ENCODE measurements at regions of chr19 and their contacts with region 1.

Region 1: DNA sequence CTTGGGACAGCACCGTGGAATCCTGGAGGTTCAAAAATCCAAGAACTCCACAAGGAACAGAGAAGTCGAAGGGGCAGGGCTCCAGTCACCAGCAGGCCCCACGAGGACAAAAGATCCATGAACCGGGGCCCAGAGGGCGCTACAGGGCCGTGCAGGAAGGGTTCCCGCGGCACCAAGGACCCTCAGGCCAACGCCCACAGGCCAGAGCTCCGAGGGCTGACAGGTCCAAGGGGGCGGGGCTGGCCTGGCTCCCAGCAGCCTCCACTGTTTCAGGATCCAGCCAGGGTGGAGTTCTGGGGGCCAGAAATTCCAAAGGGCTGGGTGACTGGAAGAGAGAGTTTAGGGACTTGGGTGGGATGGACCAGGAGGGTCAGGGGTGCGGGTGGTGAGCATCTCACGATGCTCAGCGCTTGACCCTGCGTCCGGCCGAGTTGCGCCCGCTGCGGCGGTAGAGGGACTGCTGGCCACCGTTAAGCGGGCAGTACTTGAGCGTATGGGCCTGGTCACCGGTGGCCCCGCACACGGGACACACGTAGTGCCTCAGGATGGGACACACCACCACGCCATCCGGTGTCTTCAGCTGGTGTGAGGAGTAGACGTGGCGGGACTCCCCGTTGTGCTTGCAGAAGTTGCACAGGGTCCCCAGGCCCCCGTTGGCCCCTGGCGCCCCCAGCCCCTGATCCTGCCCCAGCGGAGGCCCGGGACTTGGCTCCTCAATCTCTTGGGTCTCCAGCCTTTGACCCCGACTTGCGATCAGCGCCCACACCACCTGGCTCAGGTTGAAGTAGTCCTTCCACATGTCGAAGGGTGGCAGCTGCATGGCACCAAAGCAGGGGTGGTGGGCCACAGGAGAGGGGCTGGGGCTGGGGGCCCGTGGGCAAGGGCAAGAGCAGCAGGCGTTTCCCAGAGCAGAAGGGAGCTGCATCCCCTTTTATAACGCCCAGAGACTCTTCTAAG is at the start of gene NANOS2:
- DNase-seq: peak; percentile 94
- ATAC-seq: peak; percentile 98
- H3K4me3 Mint-ChIP-seq: no peak within 1 kb of the TSS
- H3K27ac Mint-ChIP-seq: no peak within 1 kb of the TSS
- H3K4me1 Mint-ChIP-seq: no peaks in the 10 kb centered on the region
- H3K27me3 Mint-ChIP-seq: peaks cover 7% of the 10 kb centered on the region
- CTCF ChIP-seq: no peak
- total RNA-seq, gene NANOS2: 0.13 to 0.18 TPM in 2 of 3 replicates, not detected in the other

Region 2: GRCh38 chr19:45848922-45849321 is 65.2 kb before region 1 on chr19:
- CTCF ChIA-PET with region 1: no interaction called
- POLR2A ChIA-PET with region 1: no interaction called
- DNase-seq: no peak
- ATAC-seq: peak; percentile 73
- H3K4me3 Mint-ChIP-seq: no peak overlapping the region
- H3K27ac Mint-ChIP-seq: no peak overlapping the region
- H3K4me1 Mint-ChIP-seq: no peaks in the 10 kb centered on the region
- H3K27me3 Mint-ChIP-seq: no peaks in the 10 kb centered on the region
- CTCF ChIP-seq: peak; percentile 26; the same call in 1 of the 2 replicates

Region 3: GRCh38 chr19:45902651-45903625 is 11.2 kb before region 1 on chr19:
- CTCF ChIA-PET with region 1: interaction called, 35 read pairs
- POLR2A ChIA-PET with region 1: no interaction called
- DNase-seq: peak; percentile 99
- ATAC-seq: peak; percentile 84
- H3K4me3 Mint-ChIP-seq: peak overlapping the region; percentile 91
- H3K27ac Mint-ChIP-seq: peak overlapping the region; percentile 57; the same call in 1 of the 2 replicates
- H3K4me1 Mint-ChIP-seq: peaks cover 12% of the 10 kb centered on the region
- H3K27me3 Mint-ChIP-seq: peaks cover 25% of the 10 kb centered on the region
- CTCF ChIP-seq: no peak

Region 4: DNA sequence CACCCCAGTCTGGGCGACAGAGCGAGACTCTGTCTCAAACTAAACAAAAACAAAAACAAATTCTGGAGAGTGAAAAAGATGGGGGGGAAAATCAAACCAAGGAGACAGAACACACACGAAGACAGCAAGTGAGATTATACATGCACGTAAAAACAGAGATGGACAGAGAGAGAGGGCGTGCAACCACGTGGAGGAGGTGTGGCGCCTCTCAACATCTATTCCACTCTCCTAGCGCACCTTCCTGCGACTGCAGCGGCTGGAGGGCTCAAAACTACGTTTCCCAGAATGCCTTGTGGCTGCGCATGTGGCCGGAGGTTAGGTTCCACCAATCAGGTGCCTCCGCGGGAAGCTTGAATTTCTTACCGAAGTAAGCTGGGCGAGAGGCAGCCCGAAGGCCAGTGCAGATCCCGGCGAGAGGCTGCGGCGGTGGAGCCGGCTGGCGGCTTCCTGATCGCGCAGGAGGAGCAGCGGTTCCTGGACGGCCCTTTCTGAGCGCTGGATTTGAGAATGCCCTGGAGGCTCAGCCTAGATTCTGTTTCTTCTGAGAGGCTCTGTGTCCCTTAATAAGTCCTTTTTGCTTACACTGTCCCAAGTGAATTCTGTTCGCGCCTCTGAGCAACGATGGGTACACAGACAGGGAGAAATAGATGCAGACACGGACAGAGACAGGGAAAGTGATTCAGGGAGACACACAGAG is 13.6 kb after region 1 on chr19:
- CTCF ChIA-PET with region 1: interaction called, 17 read pairs
- POLR2A ChIA-PET with region 1: no interaction called
- DNase-seq: peak; percentile 95
- ATAC-seq: peak; percentile 99
- H3K4me3 Mint-ChIP-seq: peak overlapping the region; percentile 63
- H3K27ac Mint-ChIP-seq: no peak overlapping the region
- H3K4me1 Mint-ChIP-seq: peaks cover 8% of the 10 kb centered on the region
- H3K27me3 Mint-ChIP-seq: peaks cover 66% of the 10 kb centered on the region
- CTCF ChIP-seq: no peak

Region 5: GRCh38 chr19:45973578-45974338 is 59.6 kb after region 1 on chr19 and contains the start of gene NOVA2:
- CTCF ChIA-PET with region 1: interaction called, 11 read pairs
- POLR2A ChIA-PET with region 1: no interaction called
- DNase-seq: peak; percentile 99
- ATAC-seq: peak; percentile 99
- H3K4me3 Mint-ChIP-seq: peak within 1 kb of the TSS; percentile 61
- H3K27ac Mint-ChIP-seq: no peak within 1 kb of the TSS
- H3K4me1 Mint-ChIP-seq: peaks cover 16% of the 10 kb centered on the region
- H3K27me3 Mint-ChIP-seq: peaks cover 87% of the 10 kb centered on the region
- CTCF ChIP-seq: no peak
- total RNA-seq, gene NOVA2: 11.3 to 15.6 TPM (median 15.4 TPM) in 3 replicates

Region 6: DNA sequence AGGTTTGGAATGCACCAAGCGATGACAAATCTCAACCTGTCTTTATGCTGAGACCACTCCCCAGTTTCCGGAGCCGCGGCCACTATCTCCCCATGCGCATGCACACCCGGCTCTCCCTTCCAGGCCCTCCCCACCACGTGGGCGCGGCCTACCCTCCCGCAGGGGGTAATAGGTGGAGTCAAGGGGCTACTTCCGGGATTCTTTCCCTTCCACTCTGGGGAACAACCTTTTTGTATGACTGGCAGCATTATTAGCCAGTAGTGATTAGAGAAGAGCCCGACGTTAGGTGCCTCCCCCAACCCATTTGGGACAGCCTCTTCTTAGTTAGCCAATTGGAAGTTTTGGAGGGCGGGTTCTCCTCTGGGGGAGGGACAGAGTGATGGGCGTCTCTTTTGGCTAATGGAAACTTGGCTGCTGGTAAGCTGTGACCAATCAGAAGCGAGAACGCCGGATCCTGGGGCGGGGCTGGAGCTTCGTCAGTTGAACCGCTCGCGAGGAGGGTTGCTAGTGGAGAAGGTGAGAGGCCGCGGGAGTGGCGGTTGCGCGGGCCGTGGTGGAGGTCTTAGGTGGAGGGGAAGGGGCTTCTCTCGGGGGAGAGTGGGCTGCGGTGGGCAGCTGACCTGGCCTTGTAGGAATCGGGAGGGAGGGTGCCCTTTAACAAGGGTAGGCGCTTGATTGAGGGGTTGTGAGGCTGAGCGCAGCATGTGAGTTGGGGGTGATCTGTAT is 81.0 kb after region 1 on chr19 and contains the start of gene CCDC61:
- CTCF ChIA-PET with region 1: interaction called, 10 read pairs
- POLR2A ChIA-PET with region 1: no interaction called
- DNase-seq: peak; percentile 97
- ATAC-seq: peak; percentile 96
- H3K4me3 Mint-ChIP-seq: no peak within 1 kb of the TSS
- H3K27ac Mint-ChIP-seq: peak within 1 kb of the TSS; percentile 34
- H3K4me1 Mint-ChIP-seq: peaks cover 16% of the 10 kb centered on the region
- H3K27me3 Mint-ChIP-seq: peaks cover 12% of the 10 kb centered on the region; the same call in 1 of the 2 replicates
- CTCF ChIP-seq: no peak
- total RNA-seq, gene CCDC61: 25.2 to 33.7 TPM (median 26.6 TPM) in 3 replicates

Region 7: GRCh38 chr19:46009530-46010510 is 95.7 kb after region 1 on chr19:
- CTCF ChIA-PET with region 1: interaction called, 25 read pairs
- POLR2A ChIA-PET with region 1: no interaction called
- DNase-seq: peak; percentile 89
- ATAC-seq: peak; percentile 90
- H3K4me3 Mint-ChIP-seq: no peak overlapping the region
- H3K27ac Mint-ChIP-seq: no peak overlapping the region
- H3K4me1 Mint-ChIP-seq: peaks cover 5% of the 10 kb centered on the region
- H3K27me3 Mint-ChIP-seq: peaks cover 14% of the 10 kb centered on the region
- CTCF ChIP-seq: peak; percentile 97

Region 8: DNA sequence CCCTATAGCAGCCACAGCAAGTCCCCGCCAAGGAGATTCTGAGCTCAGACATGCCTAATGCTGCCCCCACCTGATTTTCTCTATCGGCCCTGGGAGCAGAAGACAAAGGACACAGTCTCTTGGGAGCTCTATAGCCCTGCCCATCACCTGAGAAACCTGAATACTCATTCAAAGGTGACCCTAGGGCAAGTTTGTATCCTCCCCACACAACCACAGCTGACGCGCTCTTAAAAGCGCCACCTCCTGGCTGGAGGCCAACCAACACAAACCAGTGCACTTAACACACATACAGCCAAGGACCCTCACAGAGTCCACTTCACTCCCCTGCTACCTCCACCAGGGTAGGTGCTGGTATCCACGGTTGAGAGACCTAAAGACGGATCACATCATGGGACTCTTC is 135.4 kb after region 1 on chr19:
- CTCF ChIA-PET with region 1: interaction called, 11 read pairs
- POLR2A ChIA-PET with region 1: no interaction called
- DNase-seq: peak; percentile 79
- ATAC-seq: peak; percentile 99
- H3K4me3 Mint-ChIP-seq: no peak overlapping the region
- H3K27ac Mint-ChIP-seq: no peak overlapping the region; the same call in 1 of the 2 replicates
- H3K4me1 Mint-ChIP-seq: no peaks in the 10 kb centered on the region
- H3K27me3 Mint-ChIP-seq: peaks cover 74% of the 10 kb centered on the region
- CTCF ChIP-seq: peak; percentile 37; the same call in 1 of the 2 replicates